AG04449 (cell line): ENCODE measurements at regions of chr2 and their contacts with region 1.

Region 1: DNA sequence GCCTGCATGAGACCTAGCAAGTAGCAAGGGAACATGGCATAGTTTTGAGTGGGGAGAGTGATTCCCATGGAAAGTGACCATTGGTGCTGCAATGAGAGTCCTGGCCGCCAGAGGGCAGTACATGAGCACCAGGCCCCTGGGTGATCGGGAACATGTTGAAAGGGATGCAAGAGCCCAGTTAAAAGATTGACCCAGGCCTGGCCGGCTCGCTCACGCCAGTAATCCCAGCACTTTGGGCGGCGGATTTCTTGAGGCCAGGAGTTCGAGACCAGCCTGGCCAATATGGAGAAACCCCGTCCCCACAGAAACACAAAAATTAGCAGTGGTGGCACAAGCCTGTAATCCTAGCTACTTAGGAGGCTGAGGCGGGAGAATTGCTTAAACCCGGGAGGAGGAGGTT is 22.2 kb downstream of the FAP start:
- DNase-seq: no peak
- H3K4me3 ChIP-seq: no peak overlapping the region
- CTCF ChIP-seq: peak; percentile 88

Region 2: GRCh38 chr2:162174746-162175145 is 46.3 kb before region 1 on chr2:
- CTCF ChIA-PET with region 1: interaction called, 14 read pairs
- POLR2A ChIA-PET with region 1: no interaction called
- DNase-seq: no peak
- H3K4me3 ChIP-seq: no peak overlapping the region
- CTCF ChIP-seq: no peak

Region 3: DNA sequence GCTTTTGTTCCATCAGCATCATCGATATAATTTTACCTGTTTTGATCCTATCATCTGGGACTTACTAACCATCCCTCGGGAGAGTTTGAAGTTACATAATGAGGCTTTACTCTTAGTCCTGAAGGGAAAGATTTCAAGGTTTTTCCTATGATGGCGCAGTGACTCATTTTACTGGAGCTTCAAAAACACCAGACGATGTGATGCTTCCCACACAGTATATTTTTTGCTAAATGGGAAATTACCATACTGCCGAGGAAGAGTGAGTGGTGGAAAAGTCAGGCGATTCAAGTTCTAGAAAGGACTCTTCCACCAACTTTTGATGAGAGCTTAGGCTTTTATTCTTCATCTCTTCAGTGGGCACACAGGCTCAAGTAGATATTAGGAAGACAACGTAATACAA is 24.4 kb before region 1 on chr2:
- CTCF ChIA-PET with region 1: interaction called, 25 read pairs
- POLR2A ChIA-PET with region 1: no interaction called
- DNase-seq: no peak
- H3K4me3 ChIP-seq: no peak overlapping the region
- CTCF ChIP-seq: no peak

Region 4: GRCh38 chr2:162233197-162233596 is 12.1 kb after region 1 on chr2:
- CTCF ChIA-PET with region 1: interaction called, 90 read pairs
- POLR2A ChIA-PET with region 1: interaction called, 3 read pairs
- DNase-seq: peak; percentile 46
- H3K4me3 ChIP-seq: no peak overlapping the region
- CTCF ChIP-seq: no peak

Region 5: DNA sequence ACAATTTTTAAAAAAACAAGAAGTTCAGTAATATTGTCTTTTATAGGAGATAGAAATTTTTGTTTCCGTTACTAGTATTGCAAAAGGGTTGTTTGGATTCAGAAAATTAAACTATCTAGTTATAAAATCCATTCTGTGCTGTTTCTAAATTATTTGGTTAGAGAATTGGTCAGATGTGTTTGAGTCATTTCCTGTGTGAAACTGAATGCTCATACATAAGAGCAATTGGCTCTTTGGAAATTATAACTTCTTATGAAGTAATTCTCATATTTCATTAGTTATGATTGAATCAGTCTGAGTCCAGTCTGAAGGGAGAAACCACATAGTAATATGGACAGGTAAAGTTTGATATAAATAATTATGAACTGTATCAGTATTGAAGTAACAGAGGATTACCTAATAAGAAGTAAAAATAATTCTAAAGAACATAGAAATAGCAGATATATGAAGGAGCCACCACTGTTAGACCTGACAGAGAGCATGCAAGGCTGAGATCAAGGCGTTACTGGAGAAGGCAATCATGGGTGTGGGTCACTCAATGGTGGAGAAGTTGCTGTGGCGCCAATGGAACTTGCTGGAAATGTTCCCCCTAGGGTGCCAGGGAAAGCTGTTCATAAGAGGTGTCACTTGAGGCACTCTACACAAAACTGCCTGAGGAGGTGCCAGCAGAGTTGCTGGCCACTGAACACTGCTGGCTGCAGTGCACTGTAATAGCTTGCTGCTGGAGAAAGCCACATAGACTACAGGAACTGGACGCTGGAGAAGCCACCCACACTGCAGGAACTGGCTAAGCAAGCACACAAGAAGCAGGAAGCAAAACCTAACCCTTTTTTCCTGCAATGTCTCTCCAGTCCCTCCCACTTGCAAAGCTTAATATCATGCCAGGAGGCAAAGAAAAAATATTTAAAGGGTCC is 40.2 kb after region 1 on chr2:
- CTCF ChIA-PET with region 1: interaction called, 20 read pairs
- POLR2A ChIA-PET with region 1: no interaction called
- DNase-seq: no peak
- H3K4me3 ChIP-seq: no peak overlapping the region
- CTCF ChIP-seq: no peak

Region 6: DNA sequence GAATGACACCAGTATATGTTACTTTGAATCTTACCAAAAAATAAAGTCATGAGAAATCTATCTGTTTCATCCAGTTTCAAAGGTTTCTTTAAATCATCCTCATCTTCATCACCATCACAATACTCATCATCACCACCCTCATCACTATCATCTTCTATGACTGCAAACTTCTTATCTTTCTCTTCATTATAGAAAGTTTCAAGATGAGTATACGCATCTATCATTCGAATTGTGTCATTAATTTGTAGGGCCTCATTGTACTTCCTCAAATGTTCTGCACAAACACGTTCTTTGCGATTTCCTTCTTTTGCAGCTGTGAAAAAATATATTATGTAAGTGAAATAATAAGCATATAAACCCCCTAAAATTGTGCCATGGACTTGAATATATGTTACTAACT is 56.3 kb after region 1 on chr2:
- CTCF ChIA-PET with region 1: interaction called, 29 read pairs
- POLR2A ChIA-PET with region 1: no interaction called
- DNase-seq: no peak
- H3K4me3 ChIP-seq: no peak overlapping the region
- CTCF ChIP-seq: no peak

Region 7: GRCh38 chr2:162301151-162301804 is 80.2 kb after region 1 on chr2:
- CTCF ChIA-PET with region 1: interaction called, 656 read pairs
- POLR2A ChIA-PET with region 1: interaction called, 3 read pairs
- DNase-seq: peak; percentile 14
- H3K4me3 ChIP-seq: no peak overlapping the region
- CTCF ChIP-seq: peak; percentile 70